ENCODE measurements at regions of chr16 and their contacts with region 1.

Region 1: DNA sequence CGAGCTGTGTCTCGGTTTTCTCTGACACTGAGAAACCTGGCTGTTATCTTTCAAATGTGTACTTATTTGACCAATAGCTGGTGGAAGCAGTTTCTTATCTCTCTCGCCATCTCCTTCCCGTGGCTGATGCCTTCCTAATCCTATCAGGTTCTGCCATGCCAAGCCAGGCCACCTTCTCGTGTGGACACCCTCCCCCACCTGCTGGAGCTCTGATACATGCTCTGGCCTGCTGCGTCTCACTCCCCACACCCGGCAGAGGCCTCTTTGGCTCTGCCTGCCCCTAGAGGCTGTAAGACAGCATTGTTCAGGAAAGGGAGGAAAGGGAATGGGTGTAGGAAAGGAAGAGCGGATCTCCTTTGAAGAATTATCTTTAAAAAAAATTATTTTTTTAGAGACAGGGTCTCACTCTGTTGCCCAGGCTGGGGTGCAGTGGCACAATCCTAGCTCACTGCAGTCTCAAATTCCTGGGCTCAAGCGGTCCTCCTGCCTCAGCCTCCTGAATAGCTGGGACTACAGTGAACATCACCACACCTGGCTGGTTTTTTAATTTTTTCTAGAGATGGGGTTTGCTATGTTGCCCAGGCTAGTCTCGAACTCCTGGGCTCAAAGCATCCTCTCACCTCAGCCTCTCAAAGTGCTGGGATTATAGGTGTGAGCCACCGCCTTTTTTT is 7.5 kb upstream of the ARMC5 start:
- DNase-seq: peak; percentile 63
- H3K4me3 ChIP-seq: no peak overlapping the region
- H3K27ac ChIP-seq: peak overlapping the region; percentile 96
- H3K27me3 ChIP-seq: no peaks in the 10 kb centered on the region
- CTCF ChIP-seq: peak; percentile 86

Region 2: GRCh38 chr16:30747799-30748634 is 703.8 kb before region 1 on chr16 and contains the start of gene PHKG2:
- CTCF ChIA-PET with region 1: interaction called, 10 read pairs
- POLR2A ChIA-PET with region 1: no interaction called
- DNase-seq: peak; percentile 96
- H3K4me3 ChIP-seq: peak within 1 kb of the TSS; percentile 90
- H3K27ac ChIP-seq: peak within 1 kb of the TSS; percentile 65
- H3K27me3 ChIP-seq: no peaks in the 10 kb centered on the region
- CTCF ChIP-seq: no peak
- polyA plus RNA-seq, gene PHKG2: 21.7 and 26.0 TPM in 2 replicates

Region 3: GRCh38 chr16:31440516-31441184 is 11.2 kb before region 1 on chr16:
- CTCF ChIA-PET with region 1: interaction called, 25 read pairs
- POLR2A ChIA-PET with region 1: interaction called, 4 read pairs
- DNase-seq: no peak
- H3K4me3 ChIP-seq: no peak overlapping the region
- H3K27ac ChIP-seq: no peak overlapping the region
- H3K27me3 ChIP-seq: peaks cover 2% of the 10 kb centered on the region
- CTCF ChIP-seq: no peak

Region 4: DNA sequence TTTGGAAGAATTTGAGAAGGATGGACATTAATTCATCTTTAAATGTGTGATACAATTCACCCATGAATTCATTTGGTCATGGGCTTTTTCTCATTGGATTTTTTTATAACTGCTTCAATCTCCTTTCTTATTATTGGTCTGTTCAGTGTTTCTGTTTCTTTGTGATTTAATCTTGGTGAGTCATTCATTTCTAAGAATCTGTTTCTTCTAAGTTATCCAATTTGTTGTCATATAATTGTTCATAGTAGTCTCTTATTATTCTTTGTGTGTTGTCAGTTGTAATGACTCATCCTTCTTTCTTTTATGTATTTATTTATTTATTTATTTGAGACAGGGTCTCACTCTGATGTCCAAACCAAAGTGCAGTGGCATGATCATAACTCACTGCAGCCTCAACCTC is 275.7 kb after region 1 on chr16:
- CTCF ChIA-PET with region 1: no interaction called
- POLR2A ChIA-PET with region 1: no interaction called
- DNase-seq: no peak
- H3K4me3 ChIP-seq: no peak overlapping the region
- H3K27ac ChIP-seq: no peak overlapping the region
- H3K27me3 ChIP-seq: no peaks in the 10 kb centered on the region
- CTCF ChIP-seq: no peak

Measured in AG04450 (cell line).